ENCODE measurements at regions of chr3 and their contacts with region 1.

Region 1: GRCh38 chr3:45041666-45042065 is 15.6 kb downstream of the CLEC3B start:
- DNase-seq: no peak
- ATAC-seq: peak; percentile 41
- H3K4me3 Mint-ChIP-seq: peak overlapping the region; percentile 2
- H3K27ac Mint-ChIP-seq: peak overlapping the region; percentile 62
- H3K4me1 Mint-ChIP-seq: peaks cover 24% of the 10 kb centered on the region
- H3K27me3 Mint-ChIP-seq: peaks cover 18% of the 10 kb centered on the region

Region 2: GRCh38 chr3:45011756-45012508 is 29.7 kb before region 1 on chr3:
- POLR2A ChIA-PET with region 1: no interaction called
- DNase-seq: no peak
- ATAC-seq: no peak
- H3K4me3 Mint-ChIP-seq: no peak overlapping the region
- H3K27ac Mint-ChIP-seq: peak overlapping the region; percentile 36
- H3K4me1 Mint-ChIP-seq: peaks cover 2% of the 10 kb centered on the region
- H3K27me3 Mint-ChIP-seq: no peaks in the 10 kb centered on the region

Region 3: GRCh38 chr3:45143673-45144671 is 102.3 kb after region 1 on chr3:
- POLR2A ChIA-PET with region 1: no interaction called
- DNase-seq: no peak
- ATAC-seq: peak; percentile 38
- H3K4me3 Mint-ChIP-seq: peak overlapping the region; percentile 33
- H3K27ac Mint-ChIP-seq: no peak overlapping the region
- H3K4me1 Mint-ChIP-seq: peaks cover 13% of the 10 kb centered on the region
- H3K27me3 Mint-ChIP-seq: peaks cover 69% of the 10 kb centered on the region

Region 4: GRCh38 chr3:45210308-45211041 is 168.8 kb after region 1 on chr3:
- POLR2A ChIA-PET with region 1: interaction called, 20 read pairs
- DNase-seq: peak; percentile 85
- ATAC-seq: peak; percentile 91
- H3K4me3 Mint-ChIP-seq: no peak overlapping the region
- H3K27ac Mint-ChIP-seq: no peak overlapping the region
- H3K4me1 Mint-ChIP-seq: peaks cover 10% of the 10 kb centered on the region
- H3K27me3 Mint-ChIP-seq: peaks cover 16% of the 10 kb centered on the region